ENCODE measurements at regions of chr17 and their contacts with region 1.

Region 1: DNA sequence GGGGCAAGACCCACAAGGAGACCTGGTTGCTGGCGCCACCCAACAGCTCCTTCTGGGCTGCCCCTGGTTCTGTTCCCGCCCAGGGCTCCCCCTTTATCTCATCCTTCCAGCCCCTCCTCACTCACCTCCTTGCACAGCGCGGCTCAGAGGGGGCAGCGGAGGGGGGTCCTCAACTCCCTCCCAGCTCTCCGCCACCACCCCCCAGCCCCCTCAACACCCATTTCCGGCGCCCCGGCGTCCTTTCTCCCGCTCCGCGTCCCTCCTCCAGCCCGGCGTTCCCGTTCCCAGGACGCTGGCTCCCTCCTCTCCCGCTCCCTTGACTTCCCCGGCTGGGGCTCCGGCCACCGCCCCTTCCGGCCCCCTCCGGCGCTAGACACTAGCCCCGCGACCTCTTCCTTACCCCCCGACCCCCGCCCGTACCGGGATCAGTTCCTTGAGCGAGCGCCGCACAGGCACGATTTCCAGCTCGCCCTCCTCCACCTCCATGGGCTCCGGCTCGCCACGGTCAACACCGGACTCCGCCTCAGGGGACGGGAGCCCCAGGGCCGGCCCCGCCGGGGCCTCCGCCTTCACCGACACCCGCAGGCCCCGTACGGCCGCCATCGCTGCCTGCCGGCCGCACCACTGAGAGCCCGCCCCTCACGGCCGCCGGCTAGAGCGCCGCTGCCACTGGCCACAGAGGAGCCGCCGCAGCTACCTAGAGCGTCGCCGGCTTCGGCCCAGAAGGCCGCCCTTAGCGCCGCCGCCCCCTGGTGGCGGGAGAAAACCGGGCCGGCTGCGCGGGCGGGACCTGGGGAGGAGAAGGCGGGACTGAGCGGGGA is at the start of gene NCBP3:
- DNase-seq: peak; percentile 76
- H3K4me3 ChIP-seq: peak within 1 kb of the TSS; percentile 81
- H3K27ac ChIP-seq: peak within 1 kb of the TSS; percentile 68
- H3K27me3 ChIP-seq: peaks cover 5% of the 10 kb centered on the region
- CTCF ChIP-seq: peak; percentile 84
- polyA plus RNA-seq, gene NCBP3: 19.4 and 28.5 TPM in 2 replicates

Region 2: DNA sequence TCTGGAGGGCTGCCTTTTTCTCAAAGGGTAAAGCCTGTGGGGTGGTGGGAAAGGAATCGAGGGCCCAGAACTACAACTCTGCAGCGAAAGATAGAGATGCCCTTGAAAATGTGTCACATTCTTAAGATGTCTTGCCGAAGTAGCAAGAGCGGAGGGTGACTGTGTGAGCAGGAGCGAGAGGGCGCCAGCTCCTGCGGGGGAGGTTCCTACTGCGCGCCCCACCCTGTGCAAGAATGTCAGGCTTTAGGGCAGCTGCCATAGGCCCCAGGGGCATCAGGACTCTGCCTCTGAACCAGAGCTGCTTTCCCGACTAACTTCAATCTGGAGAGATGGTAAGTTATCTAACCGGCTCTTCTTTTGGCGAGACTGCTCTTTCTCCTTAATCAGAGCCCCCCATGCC is 33.1 kb before region 1 on chr17:
- CTCF ChIA-PET with region 1: interaction called, 19 read pairs
- POLR2A ChIA-PET with region 1: no interaction called
- DNase-seq: no peak
- H3K4me3 ChIP-seq: no peak overlapping the region
- H3K27ac ChIP-seq: no peak overlapping the region
- H3K27me3 ChIP-seq: no peaks in the 10 kb centered on the region
- CTCF ChIP-seq: no peak

Region 3: GRCh38 chr17:3835410-3836229 is 10.2 kb before region 1 on chr17:
- CTCF ChIA-PET with region 1: interaction called, 21 read pairs
- POLR2A ChIA-PET with region 1: interaction called, 4 read pairs
- DNase-seq: no peak
- H3K4me3 ChIP-seq: no peak overlapping the region
- H3K27ac ChIP-seq: no peak overlapping the region
- H3K27me3 ChIP-seq: no peaks in the 10 kb centered on the region
- CTCF ChIP-seq: no peak

Region 4: GRCh38 chr17:3865176-3865575 is 19.3 kb after region 1 on chr17:
- CTCF ChIA-PET with region 1: interaction called, 51 read pairs
- POLR2A ChIA-PET with region 1: no interaction called
- DNase-seq: no peak
- H3K4me3 ChIP-seq: no peak overlapping the region
- H3K27ac ChIP-seq: no peak overlapping the region
- H3K27me3 ChIP-seq: no peaks in the 10 kb centered on the region
- CTCF ChIP-seq: no peak

Region 5: DNA sequence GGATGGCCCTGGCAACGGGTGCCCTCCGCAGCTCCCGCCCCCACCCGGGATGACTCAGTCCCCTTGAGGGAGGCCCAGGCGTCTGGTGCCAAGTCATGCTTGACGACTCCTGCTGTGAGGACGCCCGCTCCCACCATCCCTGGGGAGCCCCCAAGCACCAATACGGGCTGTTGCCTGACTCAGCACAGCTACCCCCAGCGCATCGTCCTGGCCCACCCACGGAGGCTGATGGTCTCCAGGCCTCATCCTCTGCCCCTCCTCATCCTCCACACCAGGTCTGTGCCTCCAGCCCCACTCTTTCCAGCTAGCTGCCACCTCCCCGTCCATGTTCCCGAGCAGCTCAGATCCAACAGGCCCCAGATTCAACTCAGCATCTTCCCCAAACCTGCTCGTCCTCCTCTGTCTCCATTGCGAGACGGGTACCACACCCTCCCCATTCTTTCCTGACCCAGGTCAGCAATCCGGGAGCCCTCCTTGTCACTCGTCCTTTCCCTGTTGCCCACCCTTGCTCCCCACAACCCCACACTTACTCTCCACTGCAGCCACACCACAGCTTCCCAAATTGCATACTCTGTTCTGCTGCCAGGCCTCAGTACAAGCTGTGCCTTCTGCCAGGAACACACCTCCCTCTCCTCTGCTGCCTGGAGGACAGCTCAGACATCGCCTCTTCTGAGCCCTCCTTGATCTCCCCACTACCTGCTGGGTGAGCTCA is 44.5 kb after region 1 on chr17:
- CTCF ChIA-PET with region 1: interaction called, 11 read pairs
- POLR2A ChIA-PET with region 1: interaction called, 5 read pairs
- DNase-seq: peak; percentile 37
- H3K4me3 ChIP-seq: peak overlapping the region; percentile 13; the same call in 1 of the 2 replicates
- H3K27ac ChIP-seq: peak overlapping the region; percentile 81
- H3K27me3 ChIP-seq: no peaks in the 10 kb centered on the region
- CTCF ChIP-seq: no peak

Region 6: GRCh38 chr17:4195306-4195705 is 349.5 kb after region 1 on chr17:
- CTCF ChIA-PET with region 1: no interaction called
- POLR2A ChIA-PET with region 1: no interaction called
- DNase-seq: no peak
- H3K4me3 ChIP-seq: no peak overlapping the region
- H3K27ac ChIP-seq: no peak overlapping the region
- H3K27me3 ChIP-seq: no peaks in the 10 kb centered on the region
- CTCF ChIP-seq: no peak